ENCODE measurements at regions of chr2 and their contacts with region 1.

Region 1: GRCh38 chr2:162333968-162334367 is 10.0 kb upstream of the GCA start:
- DNase-seq: peak; percentile 51
- ATAC-seq: peak; percentile 45
- H3K4me3 ChIP-seq: no peak overlapping the region
- H3K4me3 Mint-ChIP-seq: no peak overlapping the region
- H3K27ac ChIP-seq: no peak overlapping the region
- H3K27ac Mint-ChIP-seq: no peak overlapping the region
- H3K4me1 ChIP-seq: no peaks in the 10 kb centered on the region
- H3K4me1 Mint-ChIP-seq: no peaks in the 10 kb centered on the region
- H3K27me3 ChIP-seq: no peaks in the 10 kb centered on the region
- H3K27me3 Mint-ChIP-seq: no peaks in the 10 kb centered on the region
- CTCF ChIP-seq: peak; percentile 54

Region 2: GRCh38 chr2:162215162-162215561 is 118.8 kb before region 1 on chr2:
- CTCF ChIA-PET with region 1: interaction called, 80 read pairs
- POLR2A ChIA-PET with region 1: no interaction called
- intact Hi-C with region 1: no loop called
- DNase-seq: no peak
- ATAC-seq: no peak
- H3K4me3 ChIP-seq: no peak overlapping the region
- H3K4me3 Mint-ChIP-seq: no peak overlapping the region
- H3K27ac ChIP-seq: no peak overlapping the region
- H3K27ac Mint-ChIP-seq: no peak overlapping the region
- H3K4me1 ChIP-seq: no peaks in the 10 kb centered on the region
- H3K4me1 Mint-ChIP-seq: no peaks in the 10 kb centered on the region
- H3K27me3 ChIP-seq: no peaks in the 10 kb centered on the region
- H3K27me3 Mint-ChIP-seq: peaks cover 15% of the 10 kb centered on the region
- CTCF ChIP-seq: no peak

Region 3: GRCh38 chr2:162221064-162221463 is 112.9 kb before region 1 on chr2:
- CTCF ChIA-PET with region 1: interaction called, 80 read pairs
- POLR2A ChIA-PET with region 1: no interaction called
- intact Hi-C with region 1: loop called (anchors 1 kb)
- DNase-seq: peak; percentile 57
- ATAC-seq: peak; percentile 58
- H3K4me3 ChIP-seq: no peak overlapping the region
- H3K4me3 Mint-ChIP-seq: no peak overlapping the region
- H3K27ac ChIP-seq: no peak overlapping the region
- H3K27ac Mint-ChIP-seq: no peak overlapping the region
- H3K4me1 ChIP-seq: no peaks in the 10 kb centered on the region
- H3K4me1 Mint-ChIP-seq: no peaks in the 10 kb centered on the region
- H3K27me3 ChIP-seq: no peaks in the 10 kb centered on the region
- H3K27me3 Mint-ChIP-seq: peaks cover 11% of the 10 kb centered on the region
- CTCF ChIP-seq: peak; percentile 87

Region 4: GRCh38 chr2:162301151-162301804 is 32.7 kb before region 1 on chr2:
- CTCF ChIA-PET with region 1: interaction called, 90 read pairs
- POLR2A ChIA-PET with region 1: no interaction called
- intact Hi-C with region 1: loop called (anchors 2 kb)
- DNase-seq: peak; percentile 72
- ATAC-seq: peak; percentile 68
- H3K4me3 ChIP-seq: no peak overlapping the region
- H3K4me3 Mint-ChIP-seq: no peak overlapping the region
- H3K27ac ChIP-seq: no peak overlapping the region
- H3K27ac Mint-ChIP-seq: no peak overlapping the region
- H3K4me1 ChIP-seq: no peaks in the 10 kb centered on the region
- H3K4me1 Mint-ChIP-seq: peaks cover 2% of the 10 kb centered on the region
- H3K27me3 ChIP-seq: no peaks in the 10 kb centered on the region
- H3K27me3 Mint-ChIP-seq: no peaks in the 10 kb centered on the region
- CTCF ChIP-seq: peak; percentile 97

Region 5: GRCh38 chr2:162318328-162319180 is 15.4 kb before region 1 on chr2 and contains the start of gene IFIH1:
- CTCF ChIA-PET with region 1: interaction called, 38 read pairs
- POLR2A ChIA-PET with region 1: interaction called, 3 read pairs
- intact Hi-C with region 1: loop called (anchors 2 kb)
- DNase-seq: peak; percentile 97
- ATAC-seq: peak; percentile 91
- H3K4me3 ChIP-seq: peak within 1 kb of the TSS; percentile 77 to 97 (median 86)
- H3K4me3 Mint-ChIP-seq: peak within 1 kb of the TSS; percentile 96
- H3K27ac ChIP-seq: peak within 1 kb of the TSS; percentile 99 to 100
- H3K27ac Mint-ChIP-seq: peak within 1 kb of the TSS; percentile 99
- H3K4me1 ChIP-seq: peaks cover 34 to 48% of the 10 kb centered on the region in 2 donors
- H3K4me1 Mint-ChIP-seq: peaks cover 64% of the 10 kb centered on the region
- H3K27me3 ChIP-seq: no peaks in the 10 kb centered on the region
- H3K27me3 Mint-ChIP-seq: no peaks in the 10 kb centered on the region
- CTCF ChIP-seq: peak; percentile 25
- total RNA-seq, gene IFIH1: 54.8 and 59.7 TPM in 2 replicates

Region 6: GRCh38 chr2:162343824-162344616 is 10.1 kb after region 1 on chr2 and contains the start of gene GCA:
- CTCF ChIA-PET with region 1: interaction called, 20 read pairs
- POLR2A ChIA-PET with region 1: no interaction called
- intact Hi-C with region 1: no loop called
- DNase-seq: peak; percentile 98
- ATAC-seq: peak; percentile 98
- H3K4me3 ChIP-seq: peak within 1 kb of the TSS; percentile 62 to 93 (median 89)
- H3K4me3 Mint-ChIP-seq: peak within 1 kb of the TSS; percentile 91
- H3K27ac ChIP-seq: peak within 1 kb of the TSS; percentile 80 to 86
- H3K27ac Mint-ChIP-seq: peak within 1 kb of the TSS; percentile 90
- H3K4me1 ChIP-seq: peaks cover 11 to 16% of the 10 kb centered on the region in 2 donors
- H3K4me1 Mint-ChIP-seq: peaks cover 19% of the 10 kb centered on the region
- H3K27me3 ChIP-seq: no peaks in the 10 kb centered on the region
- H3K27me3 Mint-ChIP-seq: no peaks in the 10 kb centered on the region
- CTCF ChIP-seq: no peak
- total RNA-seq, gene GCA: 31.6 and 33.0 TPM in 2 replicates

Measured in B cell (primary cell).